Ascending aorta (tissue), 2 donors: ENCODE measurements at regions of chr6 and their contacts with region 1.

Region 1: DNA sequence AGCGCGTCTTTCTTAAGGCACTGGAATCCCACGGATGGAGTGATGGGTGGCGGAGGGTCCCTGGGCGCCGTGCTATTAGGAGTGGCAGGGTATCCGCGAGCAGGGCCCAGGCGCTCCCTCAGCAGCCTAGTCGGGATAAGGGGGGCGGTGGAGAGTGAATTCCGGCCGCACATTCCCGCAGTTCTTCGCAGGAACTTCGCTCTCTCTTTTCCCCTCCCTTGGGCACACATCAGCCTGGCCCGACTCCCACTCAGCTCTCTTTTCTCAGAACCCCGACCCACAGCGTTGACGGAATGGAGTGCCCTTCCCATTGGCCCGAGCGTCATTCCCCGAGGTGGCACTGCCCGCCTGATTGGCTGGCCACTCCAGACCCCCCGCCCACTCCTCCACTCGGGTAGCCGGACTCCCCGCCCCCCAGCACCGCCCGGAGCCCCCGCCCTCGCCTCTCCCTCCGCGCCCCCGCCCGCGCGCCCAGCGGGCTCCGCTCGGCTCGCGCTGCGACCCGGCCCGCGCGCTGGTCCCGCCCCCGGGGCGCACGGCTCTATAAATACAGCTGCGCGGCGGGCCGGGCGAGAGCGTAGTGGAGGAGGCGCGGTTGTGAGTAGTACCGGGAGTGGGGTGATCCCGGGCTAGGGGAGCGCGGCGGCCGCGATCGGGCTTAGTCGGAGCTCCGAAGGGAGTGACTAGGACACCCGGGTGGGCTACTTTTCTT is at the start of gene ID4:
- DNase-seq: peak; percentile 82 to 98
- H3K4me3 ChIP-seq: peak within 1 kb of the TSS; percentile 63 to 95
- H3K27ac ChIP-seq: peak within 1 kb of the TSS; percentile 96
- H3K4me1 ChIP-seq: peaks cover 0 to 3% of the 10 kb centered on the region in 2 donors
- H3K27me3 ChIP-seq: no peaks in the 10 kb centered on the region
- CTCF ChIP-seq: no peak
- total RNA-seq, gene ID4: 103 TPM

Region 2: GRCh38 chr6:19632786-19633185 is 204.2 kb before region 1 on chr6:
- intact Hi-C with region 1: no loop called
- DNase-seq: no peak
- H3K4me3 ChIP-seq: no peak overlapping the region
- H3K27ac ChIP-seq: no peak overlapping the region
- H3K4me1 ChIP-seq: no peaks in the 10 kb centered on the region
- H3K27me3 ChIP-seq: no peaks in the 10 kb centered on the region
- CTCF ChIP-seq: no peak

Region 3: DNA sequence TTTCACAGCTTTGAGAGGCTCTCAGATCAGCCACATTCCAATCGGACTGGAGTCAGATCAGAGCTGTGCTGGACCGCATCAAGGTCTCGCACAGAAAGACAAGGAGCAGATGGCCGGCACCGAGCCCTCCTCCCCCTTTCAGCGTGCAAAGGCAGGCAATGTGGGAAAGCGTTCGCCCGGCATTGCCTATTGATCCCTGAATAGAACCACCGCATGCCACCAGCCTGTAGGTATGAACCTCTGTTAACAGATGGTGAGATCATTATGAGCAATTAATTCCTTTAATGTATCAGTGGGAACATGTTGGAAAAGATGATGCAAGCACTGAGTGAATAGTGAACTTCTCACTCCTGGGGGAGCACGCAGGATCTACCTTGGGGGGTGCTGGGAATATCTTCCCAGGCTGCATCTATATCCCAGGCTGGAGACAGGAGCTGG is 117.2 kb before region 1 on chr6:
- intact Hi-C with region 1: loop called (anchors 5 kb)
- DNase-seq: no peak
- H3K4me3 ChIP-seq: peak overlapping the region in 1 of 2 donors; percentile 39
- H3K27ac ChIP-seq: peak overlapping the region; percentile 8 to 29
- H3K4me1 ChIP-seq: peaks cover 7 to 26% of the 10 kb centered on the region in 2 donors
- H3K27me3 ChIP-seq: no peaks in the 10 kb centered on the region
- CTCF ChIP-seq: no peak